ENCODE measurements at regions of chr6 and their contacts with region 1.

Region 1: DNA sequence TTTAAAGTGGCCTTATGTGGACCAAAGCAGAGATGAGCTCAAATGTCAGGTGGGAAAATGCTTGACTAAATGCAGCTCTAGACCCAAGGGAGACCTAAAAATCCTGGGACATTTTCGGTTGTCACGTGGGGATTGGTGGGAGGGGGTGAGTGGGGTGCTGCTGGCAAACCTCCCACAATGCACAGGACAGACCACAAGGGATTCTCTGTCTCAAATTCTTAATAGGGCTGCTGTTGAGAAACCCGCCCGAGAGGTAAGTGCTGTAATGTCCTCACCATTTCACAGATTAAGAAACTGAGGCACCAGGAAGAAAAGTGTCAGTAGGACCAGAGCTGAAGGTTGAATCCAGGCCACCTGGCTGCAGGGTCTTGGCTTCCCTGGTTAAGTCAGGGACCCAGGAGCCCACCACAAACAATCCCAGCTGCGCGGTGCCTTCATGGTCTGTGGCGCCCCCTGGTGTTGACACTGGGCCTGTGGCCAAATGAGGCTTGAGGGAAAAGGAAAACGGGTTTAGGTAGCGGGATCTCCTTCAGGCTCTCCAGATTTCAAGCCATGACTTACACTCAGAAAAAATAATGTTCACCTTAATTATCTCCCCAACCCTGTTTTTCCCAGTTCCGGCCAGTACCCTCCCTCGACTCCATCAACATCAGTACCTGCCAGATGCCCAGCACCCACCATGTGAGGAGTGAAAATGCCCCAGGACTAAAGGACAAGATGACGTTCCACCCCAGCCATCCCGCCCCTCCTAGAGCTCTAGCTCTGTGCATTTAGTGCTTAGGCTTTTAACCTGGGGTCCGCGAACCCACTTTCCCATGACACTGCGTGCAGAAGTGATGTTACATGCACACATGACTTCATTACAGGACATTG is 7.2 kb downstream of the HLA-G start:
- DNase-seq: peak in 2 of 3 donors; percentile 9 to 20
- H3K4me3 ChIP-seq: no peak overlapping the region
- H3K4me3 Mint-ChIP-seq: peak overlapping the region; percentile 32 to 40
- H3K27ac ChIP-seq: no peak overlapping the region
- H3K27ac Mint-ChIP-seq: no peak overlapping the region
- H3K4me1 ChIP-seq: no peaks in the 10 kb centered on the region
- H3K4me1 Mint-ChIP-seq: peaks cover 3% of the 10 kb centered on the region
- H3K27me3 ChIP-seq: peaks cover 33 to 66% of the 10 kb centered on the region in 2 donors
- H3K27me3 Mint-ChIP-seq: peaks cover 55 to 81% (median 58%) of the 10 kb centered on the region in 3 donors
- CTCF ChIP-seq: peak; percentile 88

Region 2: GRCh38 chr6:29705389-29706231 is 129.2 kb before region 1 on chr6:
- intact Hi-C with region 1: loop called (anchors 2 to 5 kb)
- DNase-seq: peak in 2 of 3 donors; percentile 48 to 54
- H3K4me3 ChIP-seq: no peak overlapping the region
- H3K4me3 Mint-ChIP-seq: no peak overlapping the region
- H3K27ac ChIP-seq: no peak overlapping the region
- H3K27ac Mint-ChIP-seq: no peak overlapping the region
- H3K4me1 ChIP-seq: peaks cover 10% of the 10 kb centered on the region in 2 donors
- H3K4me1 Mint-ChIP-seq: peaks cover 12% of the 10 kb centered on the region
- H3K27me3 ChIP-seq: peaks cover 11 to 31% of the 10 kb centered on the region in 2 donors
- H3K27me3 Mint-ChIP-seq: peaks cover 22 to 47% (median 46%) of the 10 kb centered on the region in 3 donors
- CTCF ChIP-seq: peak; percentile 77

Region 3: DNA sequence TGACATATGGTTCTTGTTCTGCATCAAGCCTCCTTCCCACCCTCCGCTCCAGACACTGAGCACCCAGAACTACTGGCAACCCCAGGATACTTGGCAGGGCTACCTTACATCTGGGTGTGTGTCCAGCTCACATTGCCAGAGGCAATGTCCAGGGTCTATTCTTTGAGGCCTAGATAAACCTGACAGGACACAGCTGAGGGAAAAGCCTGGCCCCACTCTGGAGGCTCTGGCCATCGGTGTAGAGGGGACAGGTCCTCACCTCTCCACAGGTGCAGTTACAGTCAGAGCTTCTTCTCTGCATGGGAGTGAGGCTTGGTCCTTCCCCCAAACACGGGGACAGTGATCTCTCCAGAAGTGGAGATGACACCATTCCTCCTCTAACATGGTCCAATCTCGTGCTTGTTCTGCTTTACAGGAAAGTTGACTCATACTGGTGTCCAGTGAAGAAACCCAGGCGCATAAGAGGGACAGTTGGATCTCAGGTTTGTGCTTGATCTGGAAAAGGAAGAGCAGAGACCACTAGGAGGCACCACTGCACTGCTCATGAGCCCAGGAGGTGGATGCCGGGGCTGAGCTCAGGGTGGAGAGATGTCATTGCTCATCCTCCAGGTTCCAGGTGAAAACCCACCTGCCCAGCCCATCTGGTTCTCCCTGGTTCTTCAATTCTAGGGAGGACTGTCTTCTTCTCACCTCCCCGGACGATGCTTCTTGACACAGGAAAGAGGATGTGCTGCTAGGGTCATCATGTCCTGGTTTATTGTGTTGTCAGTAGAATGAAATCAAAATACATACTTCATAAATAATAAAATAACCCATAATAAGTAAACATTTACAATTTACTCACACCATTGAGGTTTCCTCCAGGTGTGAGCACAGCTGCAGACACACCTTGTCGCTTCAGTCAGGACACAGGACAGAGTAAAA is 96.8 kb before region 1 on chr6:
- intact Hi-C with region 1: loop called (anchors 2 to 10 kb)
- DNase-seq: peak; percentile 75 to 90 (median 79)
- H3K4me3 ChIP-seq: no peak overlapping the region
- H3K4me3 Mint-ChIP-seq: no peak overlapping the region
- H3K27ac ChIP-seq: no peak overlapping the region
- H3K27ac Mint-ChIP-seq: peak overlapping the region in 2 of 7 donors; percentile 48 to 53
- H3K4me1 ChIP-seq: no peaks in the 10 kb centered on the region
- H3K4me1 Mint-ChIP-seq: peaks cover 15% of the 10 kb centered on the region
- H3K27me3 ChIP-seq: no peaks in the 10 kb centered on the region
- H3K27me3 Mint-ChIP-seq: peaks cover 0 to 3% (median 1%) of the 10 kb centered on the region in 3 donors
- CTCF ChIP-seq: peak; percentile 83